ENCODE measurements at regions of chr9 and their contacts with region 1.

Region 1: DNA sequence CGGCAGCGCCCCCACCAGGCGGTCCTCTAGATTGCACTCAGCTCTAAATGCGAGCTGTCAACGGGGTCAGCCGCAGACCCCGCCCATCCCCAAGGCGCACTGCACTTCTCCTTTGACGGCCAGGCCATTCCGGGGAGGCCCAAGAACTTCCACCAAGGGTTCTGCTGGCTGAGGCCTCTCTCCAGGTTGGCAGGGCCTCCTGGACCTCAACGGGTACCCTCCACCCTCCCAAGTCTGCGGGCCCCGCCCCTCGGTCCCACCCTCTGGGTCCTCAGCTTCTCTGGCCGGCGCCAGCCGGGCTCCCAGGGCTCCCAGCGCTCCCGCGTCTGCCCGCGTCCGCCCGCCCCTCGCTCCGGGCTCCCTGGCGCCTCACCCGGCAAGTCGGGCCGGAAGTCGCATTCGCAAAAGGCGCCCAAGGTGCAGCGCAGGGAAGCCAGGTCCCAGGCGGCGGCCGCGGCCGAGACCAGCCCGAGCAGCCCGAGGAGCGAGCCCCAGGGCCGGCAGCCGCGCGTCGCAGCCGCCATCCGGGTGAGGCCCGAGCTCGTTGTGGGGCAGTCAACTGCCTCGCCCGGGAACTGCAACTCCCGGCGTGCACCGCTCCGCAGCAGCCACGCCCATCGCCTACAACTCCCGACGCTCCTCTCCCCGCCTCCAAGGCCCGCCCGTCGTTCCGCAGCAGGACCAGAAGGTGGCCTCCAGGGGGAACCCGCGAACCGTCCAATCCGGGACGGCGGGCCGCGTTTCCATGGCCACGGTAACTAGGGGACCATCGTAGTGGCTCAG is at the start of gene TOR2A:
- DNase-seq: peak; percentile 91 to 97
- ATAC-seq: peak; percentile 92 to 95
- H3K4me3 ChIP-seq: peak within 1 kb of the TSS; percentile 72
- H3K27ac ChIP-seq: peak within 1 kb of the TSS; percentile 96
- H3K4me1 ChIP-seq: peaks cover 12% of the 10 kb centered on the region
- CTCF ChIP-seq: peak; percentile 90
- EP300 ChIP-seq: no peak; a peak in 1 of 5 replicates
- POLR2A ChIP-seq: peak; percentile 78
- RAD21 ChIP-seq: peak; percentile 98
- polyA plus RNA-seq, gene TOR2A: 4.9 and 5.5 TPM in 2 replicates

Region 2: GRCh38 chr9:127586537-127586936 is 148.4 kb before region 1 on chr9:
- CTCF ChIA-PET with region 1: interaction called, 243 read pairs
- POLR2A ChIA-PET with region 1: no interaction called
- DNase-seq: peak; percentile 81 to 82
- ATAC-seq: peak; percentile 93 to 94
- H3K4me3 ChIP-seq: no peak overlapping the region
- H3K27ac ChIP-seq: peak overlapping the region; percentile 46 to 73; a peak in 4 of 6 replicates
- H3K4me1 ChIP-seq: peaks cover 38% of the 10 kb centered on the region; the same call in 2 of the 3 replicates
- CTCF ChIP-seq: peak; percentile 84
- EP300 ChIP-seq: no peak
- POLR2A ChIP-seq: no peak
- RAD21 ChIP-seq: peak; percentile 94 to 98

Region 3: GRCh38 chr9:127684576-127684975 is 50.4 kb before region 1 on chr9:
- CTCF ChIA-PET with region 1: interaction called, 21 read pairs
- POLR2A ChIA-PET with region 1: no interaction called
- DNase-seq: no peak
- ATAC-seq: peak in 1 of 2 experiments; percentile 56; a peak in 3 of 6 replicates
- H3K4me3 ChIP-seq: no peak overlapping the region
- H3K27ac ChIP-seq: no peak overlapping the region
- H3K4me1 ChIP-seq: peaks cover 5% of the 10 kb centered on the region; the same call in 2 of the 3 replicates
- CTCF ChIP-seq: no peak
- EP300 ChIP-seq: no peak
- POLR2A ChIP-seq: no peak
- RAD21 ChIP-seq: no peak

Region 4: DNA sequence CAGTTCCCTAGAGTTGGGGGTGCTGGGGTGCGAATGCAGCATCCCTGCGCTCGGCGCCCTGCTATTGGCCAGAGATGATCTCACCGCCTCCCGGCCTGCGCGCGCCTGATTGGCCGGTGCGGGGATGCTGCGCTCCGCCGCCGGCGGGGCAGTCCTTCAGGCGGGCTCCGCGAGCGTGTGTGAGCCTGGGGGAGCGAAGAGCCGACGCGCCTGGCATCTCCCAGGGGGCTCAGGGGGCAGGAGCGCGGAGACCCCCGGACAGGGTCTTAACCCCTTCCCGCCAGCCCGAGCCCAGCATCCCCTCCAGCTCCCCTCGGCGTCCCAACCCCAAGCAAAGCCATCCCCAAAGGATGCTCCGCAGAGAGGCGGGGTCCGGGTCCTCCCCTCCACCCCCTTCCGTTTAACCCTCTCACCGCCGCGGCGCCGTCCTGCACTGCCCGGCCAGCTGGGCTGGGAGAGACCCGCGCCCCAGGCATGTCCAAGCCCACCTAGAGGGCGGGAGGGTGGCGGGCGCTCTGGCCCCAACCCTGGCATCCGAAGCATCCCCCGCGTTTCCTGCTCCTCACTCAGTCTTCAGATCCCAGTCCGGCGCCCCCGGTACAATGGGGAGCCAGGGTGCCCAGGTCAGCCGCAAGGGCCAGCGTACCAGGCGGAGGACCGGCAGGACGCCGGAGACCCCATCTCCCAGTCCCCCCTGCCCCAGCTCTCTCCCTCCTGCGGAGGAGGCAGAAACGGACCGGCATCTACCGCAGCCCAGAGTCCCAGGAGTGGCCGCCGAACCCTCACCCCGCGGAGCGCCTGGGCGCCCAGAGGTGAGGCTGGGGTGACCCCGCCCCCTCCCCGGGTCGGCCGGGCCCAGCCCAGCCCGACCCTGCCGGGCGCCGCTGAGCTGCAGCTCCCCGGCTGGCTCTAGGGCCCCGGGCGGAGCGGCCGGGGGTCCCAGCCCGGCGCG is 19.4 kb after region 1 on chr9:
- CTCF ChIA-PET with region 1: interaction called, 55 read pairs
- POLR2A ChIA-PET with region 1: interaction called, 3 read pairs
- DNase-seq: peak; percentile 38 to 82
- ATAC-seq: peak; percentile 78 to 93; a peak in 5 of 6 replicates
- H3K4me3 ChIP-seq: peak overlapping the region; percentile 45
- H3K27ac ChIP-seq: peak overlapping the region in 1 of 2 experiments; percentile 54; a peak in 2 of 6 replicates
- H3K4me1 ChIP-seq: peaks cover 14% of the 10 kb centered on the region
- CTCF ChIP-seq: no peak
- EP300 ChIP-seq: no peak
- POLR2A ChIP-seq: no peak
- RAD21 ChIP-seq: no peak

Region 5: GRCh38 chr9:127796899-127797370 is 62.0 kb after region 1 on chr9:
- CTCF ChIA-PET with region 1: interaction called, 20 read pairs
- POLR2A ChIA-PET with region 1: interaction called, 3 read pairs
- DNase-seq: no peak
- ATAC-seq: no peak; a peak in 1 of 6 replicates
- H3K4me3 ChIP-seq: no peak overlapping the region
- H3K27ac ChIP-seq: no peak overlapping the region
- H3K4me1 ChIP-seq: peaks cover 33% of the 10 kb centered on the region
- CTCF ChIP-seq: no peak
- EP300 ChIP-seq: no peak
- POLR2A ChIP-seq: no peak
- RAD21 ChIP-seq: no peak

Region 6: DNA sequence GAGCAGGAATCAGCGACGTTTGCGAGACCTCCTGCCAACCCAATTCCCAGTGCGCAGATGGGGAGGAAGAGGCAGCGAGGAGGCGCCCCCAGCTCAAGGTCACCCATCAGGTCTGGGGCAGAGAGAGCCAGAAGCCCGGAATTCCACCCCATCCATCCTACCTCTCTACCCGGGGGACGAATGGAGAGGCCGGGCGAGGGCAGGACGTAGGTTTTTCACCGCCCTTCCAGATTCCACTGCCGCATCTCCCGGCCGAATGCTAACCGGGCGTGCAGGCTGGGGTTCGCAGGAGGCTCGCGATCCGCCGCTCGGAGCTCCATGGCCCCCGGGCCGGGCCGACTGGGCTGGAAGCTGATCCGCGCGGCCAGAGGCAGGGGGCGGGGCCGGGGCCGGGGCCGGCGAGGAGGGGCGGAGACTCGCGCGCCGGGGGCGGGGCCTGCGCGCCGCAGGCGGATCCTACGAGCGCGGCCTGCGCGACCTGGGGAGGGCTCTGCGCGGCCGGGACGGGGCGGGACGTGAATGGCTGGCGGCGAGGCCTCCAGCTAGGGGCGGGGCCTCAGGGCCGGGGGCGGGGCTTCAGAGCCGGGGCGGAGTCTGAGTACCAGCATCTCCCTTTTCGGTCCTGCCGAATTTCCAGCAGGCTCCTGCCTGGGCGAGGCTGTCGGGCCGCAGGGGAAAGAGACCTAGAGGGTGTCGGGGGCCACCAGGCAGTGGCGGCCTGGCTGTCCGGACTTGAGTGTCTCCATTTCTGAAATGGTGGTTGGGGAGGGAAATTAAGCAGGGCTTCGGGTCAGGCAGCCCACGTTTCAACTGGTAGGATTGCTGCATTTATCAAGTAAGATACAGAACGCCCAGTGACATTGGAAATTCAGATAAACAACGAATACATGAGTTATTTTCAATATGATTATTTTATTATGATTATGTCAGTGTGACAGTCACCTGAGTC is 182.0 kb after region 1 on chr9 and contains the start of gene ST6GALNAC4:
- CTCF ChIA-PET with region 1: interaction called, 60 read pairs
- POLR2A ChIA-PET with region 1: interaction called, 5 read pairs
- DNase-seq: peak; percentile 74 to 89
- ATAC-seq: peak; percentile 42 to 74
- H3K4me3 ChIP-seq: peak within 1 kb of the TSS; percentile 65
- H3K27ac ChIP-seq: peak within 1 kb of the TSS; percentile 82 to 90
- H3K4me1 ChIP-seq: peaks cover 72% of the 10 kb centered on the region
- CTCF ChIP-seq: no peak
- EP300 ChIP-seq: no peak
- POLR2A ChIP-seq: peak; percentile 43; the same call in 1 of the 2 replicates
- RAD21 ChIP-seq: no peak
- polyA plus RNA-seq, gene ST6GALNAC4: 11.0 and 12.5 TPM in 2 replicates

Region 7: DNA sequence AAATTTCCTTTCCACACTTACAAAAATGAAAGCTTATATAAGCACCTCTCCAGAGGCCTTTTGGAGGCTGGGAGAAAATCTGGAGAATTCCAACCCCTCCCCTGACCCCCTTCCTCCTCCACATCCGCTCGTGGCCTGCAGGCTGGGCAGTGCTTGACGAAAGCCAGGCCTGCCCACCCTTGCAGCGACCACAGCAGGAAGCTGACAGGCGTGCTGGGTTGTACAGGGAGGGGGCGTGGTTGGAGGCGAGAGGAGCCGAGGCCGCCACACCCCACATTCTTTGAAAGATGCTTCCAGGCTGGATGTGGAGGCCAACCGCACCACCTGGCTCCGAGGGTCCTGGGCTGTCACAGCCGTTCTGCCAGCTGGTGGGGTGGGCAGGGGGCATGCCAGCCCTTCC is 1490.9 kb after region 1 on chr9:
- CTCF ChIA-PET with region 1: no interaction called
- POLR2A ChIA-PET with region 1: no interaction called
- DNase-seq: peak; percentile 49 to 77
- ATAC-seq: peak; percentile 56 to 81; a peak in 4 of 6 replicates
- H3K4me3 ChIP-seq: no peak overlapping the region
- H3K27ac ChIP-seq: peak overlapping the region; percentile 54 to 74
- H3K4me1 ChIP-seq: peaks cover 28% of the 10 kb centered on the region
- CTCF ChIP-seq: no peak
- EP300 ChIP-seq: no peak
- POLR2A ChIP-seq: no peak
- RAD21 ChIP-seq: no peak